ENCODE measurements at regions of chr1 and their contacts with region 1.

Region 1: GRCh38 chr1:227549892-227550291 is 13.5 kb upstream of the ZNF678 start:
- DNase-seq: no peak
- ATAC-seq: no peak
- H3K4me3 ChIP-seq: no peak overlapping the region
- H3K4me3 Mint-ChIP-seq: no peak overlapping the region
- H3K27ac ChIP-seq: no peak overlapping the region
- H3K27ac Mint-ChIP-seq: no peak overlapping the region
- H3K4me1 ChIP-seq: no peaks in the 10 kb centered on the region
- H3K4me1 Mint-ChIP-seq: no peaks in the 10 kb centered on the region
- H3K27me3 ChIP-seq: peaks cover 0 to 22% of the 10 kb centered on the region in 2 experiments
- H3K27me3 Mint-ChIP-seq: peaks cover 10 to 13% of the 10 kb centered on the region in 2 donors

Region 2: DNA sequence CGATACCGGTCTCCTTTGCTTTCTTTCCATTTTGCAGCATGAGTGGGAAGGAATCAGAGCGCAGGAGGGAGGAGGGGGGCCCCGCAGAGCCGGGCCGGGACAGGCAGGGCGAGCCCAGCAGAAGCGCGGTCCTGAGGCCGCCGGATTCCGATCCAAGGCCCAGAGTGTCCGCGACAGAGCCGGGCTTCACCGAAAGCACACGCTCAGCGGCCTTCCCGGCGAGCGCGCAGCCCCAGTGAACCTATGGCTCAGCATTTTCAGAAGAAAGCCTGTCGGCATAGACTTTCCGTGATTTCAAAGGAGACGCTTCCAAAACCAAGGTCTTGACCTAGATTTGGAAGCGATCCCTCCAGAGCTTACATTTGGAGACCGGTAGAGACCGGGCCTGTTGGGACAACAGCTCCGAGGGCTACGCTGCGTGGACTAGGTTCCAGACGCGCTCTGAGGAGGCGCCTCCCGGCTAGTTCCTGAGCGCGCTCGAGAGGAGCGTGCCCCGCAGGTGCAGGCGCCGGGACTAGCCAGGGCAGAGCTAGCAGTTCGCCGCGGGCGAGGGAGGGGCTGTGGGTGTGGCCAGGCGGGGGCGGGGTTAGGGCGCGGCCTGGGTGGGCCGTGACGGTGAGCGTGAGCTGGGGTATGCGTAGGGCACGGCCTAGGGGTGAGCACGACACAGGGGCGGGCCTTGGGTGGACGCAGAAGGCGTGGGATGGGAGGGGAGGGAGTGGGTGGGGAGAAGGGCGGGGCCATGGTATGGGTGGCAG is 237.8 kb after region 1 on chr1:
- CTCF ChIA-PET with region 1: no interaction called
- POLR2A ChIA-PET with region 1: interaction called in 1 of 2 experiments, 10 read pairs
- DNase-seq: peak; percentile 86 to 98 (median 92)
- ATAC-seq: peak; percentile 90 to 94 (median 92)
- H3K4me3 ChIP-seq: peak overlapping the region; percentile 59 to 88
- H3K4me3 Mint-ChIP-seq: peak overlapping the region; percentile 78 to 86 (median 81)
- H3K27ac ChIP-seq: peak overlapping the region; percentile 1
- H3K27ac Mint-ChIP-seq: peak overlapping the region; percentile 50 to 72
- H3K4me1 ChIP-seq: peaks cover 2 to 33% of the 10 kb centered on the region in 2 experiments
- H3K4me1 Mint-ChIP-seq: peaks cover 17 to 27% (median 27%) of the 10 kb centered on the region in 3 donors
- H3K27me3 ChIP-seq: peaks cover 0 to 8% of the 10 kb centered on the region in 2 experiments
- H3K27me3 Mint-ChIP-seq: no peaks in the 10 kb centered on the region